ENCODE measurements at regions of chr17 and their contacts with region 1.

Region 1: DNA sequence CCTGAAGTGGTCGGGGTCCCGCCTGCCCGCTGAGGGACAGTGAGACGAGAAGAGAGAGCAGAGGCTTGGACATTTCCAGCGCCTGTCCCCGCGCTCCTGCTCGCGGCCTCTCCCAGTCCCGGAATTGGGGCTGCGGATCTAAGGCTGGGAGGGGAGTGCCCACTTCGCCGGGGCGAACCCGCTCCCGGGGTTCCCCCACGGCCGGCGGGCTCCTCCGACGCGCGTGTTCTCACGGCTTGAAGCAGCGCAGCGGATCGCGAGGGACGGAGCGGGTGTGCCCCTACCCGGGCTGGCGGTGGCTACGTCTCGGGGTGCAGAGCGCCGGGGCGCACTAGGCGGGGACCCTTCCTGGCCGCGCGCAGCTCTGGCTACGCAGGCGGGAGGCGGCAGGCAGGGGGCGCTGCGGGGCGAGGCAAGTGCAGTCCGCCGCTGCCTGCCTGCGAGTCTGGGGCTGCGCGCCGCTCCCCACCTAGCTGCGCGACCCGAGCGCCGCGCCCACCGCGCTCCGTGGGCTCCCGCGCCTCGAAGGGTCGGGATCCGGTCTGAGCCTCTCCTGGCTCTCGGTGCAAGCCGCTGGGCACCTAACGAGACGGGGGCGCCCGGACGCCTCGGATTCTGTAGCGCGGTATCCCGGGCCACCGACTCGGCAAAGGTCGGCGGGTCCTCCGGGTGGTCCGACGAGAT is 1.2 kb downstream of the NGFR start:
- DNase-seq: peak; percentile 80 to 96 (median 94)
- ATAC-seq: peak; percentile 80 to 86
- H3K4me3 ChIP-seq: peak overlapping the region; percentile 36
- H3K27ac ChIP-seq: no peak overlapping the region
- H3K4me1 ChIP-seq: no peaks in the 10 kb centered on the region
- H3K27me3 ChIP-seq: no peaks in the 10 kb centered on the region

Region 2: DNA sequence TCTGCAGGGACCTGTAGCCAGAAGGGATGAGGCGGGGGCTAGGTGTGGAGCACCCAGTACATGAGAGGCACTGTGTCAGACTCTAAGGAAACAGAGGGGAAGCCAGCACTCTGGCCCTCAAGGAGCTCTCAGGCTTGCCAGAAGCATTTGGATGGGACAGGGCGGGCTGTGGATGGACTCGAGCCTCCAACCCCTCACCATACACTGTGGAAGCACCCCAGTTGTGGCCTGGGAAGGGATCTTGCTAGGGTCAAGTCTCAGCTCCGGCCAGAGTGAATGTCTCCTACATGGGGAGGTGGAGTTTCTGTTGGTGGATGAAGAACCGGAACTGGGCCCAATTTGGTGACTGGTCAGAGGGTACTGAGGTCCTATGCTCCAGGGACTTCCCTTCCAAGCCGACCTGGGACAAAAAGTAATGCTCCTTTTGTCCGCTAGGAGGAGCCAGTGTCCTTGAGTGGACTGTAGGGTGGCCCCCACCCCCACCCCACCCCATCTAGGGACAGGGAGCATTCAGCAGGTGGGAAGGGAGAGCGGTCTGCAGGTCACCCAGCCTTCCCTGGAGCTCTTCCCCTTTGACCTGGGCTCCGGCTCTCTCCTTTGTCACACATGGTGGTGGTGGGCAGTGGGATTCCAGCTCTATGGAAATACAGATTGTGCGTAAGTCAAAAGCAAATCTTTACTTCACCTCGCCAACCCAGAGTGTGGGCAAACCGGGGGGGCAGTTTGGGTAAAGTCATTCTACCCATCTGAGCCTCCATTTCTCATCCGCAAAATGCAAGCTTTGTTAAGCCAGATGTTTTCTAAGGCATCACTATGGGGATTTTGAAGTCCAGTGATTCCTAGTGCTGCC is 61.3 kb before region 1 on chr17:
- intact Hi-C with region 1: loop called in 3 of 4 experiments (anchors 5 to 10 kb)
- DNase-seq: peak in 1 of 3 donors; percentile 56
- ATAC-seq: peak; percentile 30 to 63
- H3K4me3 ChIP-seq: no peak overlapping the region
- H3K27ac ChIP-seq: no peak overlapping the region
- H3K4me1 ChIP-seq: no peaks in the 10 kb centered on the region
- H3K27me3 ChIP-seq: no peaks in the 10 kb centered on the region

Region 3: DNA sequence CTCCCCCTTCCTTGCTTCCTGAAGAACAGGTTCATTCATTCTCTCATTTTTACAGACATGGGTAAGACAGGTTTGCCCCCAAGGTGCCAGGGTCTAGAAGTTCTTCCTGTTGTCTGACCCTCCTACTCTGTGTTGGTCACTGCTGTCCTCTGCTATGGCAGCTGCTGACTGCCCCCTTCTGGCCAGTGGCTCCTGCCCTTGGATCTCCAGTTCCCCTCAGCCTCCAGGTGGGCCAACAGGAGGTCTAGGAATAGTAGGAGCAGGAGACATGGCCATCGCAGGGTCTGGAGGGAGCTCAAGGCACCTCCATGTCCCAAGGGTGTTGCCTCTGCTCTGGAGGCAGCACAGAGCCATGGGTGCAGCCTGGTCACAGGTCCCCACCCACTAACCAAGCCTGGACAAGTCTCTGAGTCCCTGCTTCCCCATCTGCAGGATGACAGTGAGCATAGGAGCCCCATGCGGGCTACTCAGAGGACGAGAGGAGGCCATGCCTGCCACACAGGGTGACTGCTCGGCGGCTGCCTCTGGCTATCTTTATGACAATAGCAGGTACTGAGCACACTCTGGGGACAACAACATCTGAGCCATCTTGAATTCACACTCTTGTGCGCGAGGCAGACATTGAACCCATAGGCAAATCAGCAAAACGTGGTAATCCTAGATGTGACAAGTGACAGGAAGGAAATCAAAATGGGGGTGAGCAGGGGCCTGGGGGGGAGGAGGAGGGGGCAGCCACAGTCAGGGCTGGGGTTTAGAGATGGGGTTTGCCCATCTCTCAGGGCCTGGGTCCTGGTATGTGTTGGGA is 52.4 kb after region 1 on chr17:
- intact Hi-C with region 1: loop called in 3 of 4 experiments (anchors 5 to 10 kb)
- DNase-seq: peak; percentile 68 to 89 (median 82)
- ATAC-seq: peak; percentile 59 to 65
- H3K4me3 ChIP-seq: no peak overlapping the region
- H3K27ac ChIP-seq: no peak overlapping the region
- H3K4me1 ChIP-seq: no peaks in the 10 kb centered on the region
- H3K27me3 ChIP-seq: no peaks in the 10 kb centered on the region

Region 4: GRCh38 chr17:49556223-49556971 is 60.1 kb after region 1 on chr17:
- intact Hi-C with region 1: loop called in 3 of 4 experiments (anchors 2 to 10 kb)
- DNase-seq: peak; percentile 81 to 93 (median 92)
- ATAC-seq: peak; percentile 89 to 90
- H3K4me3 ChIP-seq: no peak overlapping the region
- H3K27ac ChIP-seq: no peak overlapping the region
- H3K4me1 ChIP-seq: no peaks in the 10 kb centered on the region
- H3K27me3 ChIP-seq: no peaks in the 10 kb centered on the region